A549 (cell line): ENCODE measurements at regions of chr2 and their contacts with region 1.

Region 1: DNA sequence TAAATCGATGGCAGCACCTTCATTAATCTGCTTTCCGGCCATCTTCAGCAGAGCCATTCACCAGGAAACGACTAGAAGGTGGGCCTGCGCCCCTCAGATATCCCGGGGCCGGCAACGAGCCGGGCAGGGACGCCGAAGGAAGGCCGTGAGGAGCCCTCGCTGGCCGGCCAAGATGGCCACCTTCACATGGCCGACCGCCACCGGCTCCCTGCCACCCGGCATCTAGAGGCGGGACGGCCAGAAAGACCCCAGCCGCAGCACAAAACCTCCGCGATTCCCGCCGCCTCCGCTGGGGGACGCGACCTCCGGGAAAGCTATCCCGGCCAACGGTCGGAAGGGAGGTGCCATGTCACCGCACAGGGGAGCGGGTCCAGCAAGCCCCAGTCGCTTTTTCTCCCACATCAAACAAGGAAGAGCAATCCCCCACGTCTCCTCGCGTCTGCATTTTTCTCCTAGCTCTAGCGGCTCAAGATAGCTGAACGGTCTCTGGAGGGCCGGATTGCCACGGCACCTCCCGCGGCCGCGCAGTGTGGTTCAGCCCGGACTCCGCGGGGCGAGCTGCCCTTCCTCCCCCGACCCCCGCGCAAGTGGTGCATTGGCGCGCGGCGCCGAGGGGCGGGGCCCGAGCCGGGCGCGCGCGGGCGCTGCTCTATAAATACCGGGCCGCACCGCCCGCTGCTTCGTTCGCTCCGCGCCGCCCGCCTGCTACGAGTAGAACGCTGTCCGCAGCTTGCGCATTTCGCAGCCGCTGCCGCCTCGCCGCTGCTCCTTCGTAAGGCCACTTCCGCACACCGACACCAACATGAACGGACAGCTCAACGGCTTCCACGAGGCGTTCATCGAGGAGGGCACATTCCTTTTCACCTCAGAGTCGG is at the start of gene MAT2A:
- DNase-seq: peak; percentile 74 to 97
- ATAC-seq: peak; percentile 75 to 82
- H3K4me3 ChIP-seq: peak within 1 kb of the TSS; percentile 98
- H3K27ac ChIP-seq: peak within 1 kb of the TSS; percentile 98 to 100
- H3K4me1 ChIP-seq: peaks cover 47% of the 10 kb centered on the region
- CTCF ChIP-seq: peak; percentile 60
- EP300 ChIP-seq: no peak
- POLR2A ChIP-seq: peak; percentile 100
- RAD21 ChIP-seq: peak; percentile 56 to 63; a peak in 4 of 5 replicates
- polyA plus RNA-seq, gene MAT2A: 1,024 and 1,329 TPM in 2 replicates

Region 2: GRCh38 chr2:85181134-85181631 is 357.5 kb before region 1 on chr2:
- CTCF ChIA-PET with region 1: no interaction called
- POLR2A ChIA-PET with region 1: no interaction called
- DNase-seq: no peak
- ATAC-seq: peak in 1 of 2 experiments; percentile 55; a peak in 3 of 6 replicates
- H3K4me3 ChIP-seq: no peak overlapping the region
- H3K27ac ChIP-seq: no peak overlapping the region
- H3K4me1 ChIP-seq: no peaks in the 10 kb centered on the region
- CTCF ChIP-seq: no peak
- EP300 ChIP-seq: no peak
- POLR2A ChIP-seq: no peak
- RAD21 ChIP-seq: no peak

Region 3: DNA sequence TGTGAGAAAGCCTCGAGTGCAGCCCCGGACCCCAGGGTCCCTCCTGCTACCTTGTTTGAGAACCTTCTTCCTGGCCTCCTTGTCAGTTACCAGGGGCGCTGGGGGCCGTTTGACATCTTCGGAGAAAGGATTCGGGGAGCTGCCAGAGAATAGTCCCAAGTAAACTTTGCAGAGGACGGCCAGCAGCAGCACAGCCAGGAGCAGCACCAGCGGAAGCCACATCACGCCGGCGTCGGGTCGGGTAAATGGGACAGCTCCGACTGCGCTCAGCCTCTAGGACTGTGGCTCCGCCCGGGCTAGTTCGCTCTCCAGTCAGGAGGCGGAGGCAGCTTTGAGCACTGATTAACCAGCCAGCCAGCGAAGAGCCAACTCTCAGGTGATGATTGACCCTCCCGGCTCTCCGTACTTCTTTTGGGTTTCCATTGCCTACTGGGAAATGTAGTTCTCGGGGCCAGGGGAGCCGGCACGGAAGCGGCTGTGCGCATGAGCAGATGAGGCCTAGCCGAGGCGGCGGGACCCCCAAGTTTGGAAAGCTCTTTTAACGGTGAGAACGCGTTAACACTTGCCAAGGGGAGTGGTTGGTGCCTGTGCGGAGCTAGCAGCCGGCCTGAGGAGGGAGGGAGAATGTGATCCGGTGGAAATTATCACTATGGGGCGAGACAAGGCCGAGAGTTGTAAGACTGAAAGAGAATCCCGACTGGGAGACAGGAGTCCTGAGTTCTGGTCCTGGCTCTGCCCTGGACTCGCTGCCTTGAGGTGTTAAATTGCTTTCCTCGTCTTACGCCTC is 184.2 kb before region 1 on chr2 and contains the starts of genes ELMOD3 and RETSAT:
- CTCF ChIA-PET with region 1: interaction called, 5 read pairs
- POLR2A ChIA-PET with region 1: interaction called, 25 read pairs
- DNase-seq: peak; percentile 98 to 100
- ATAC-seq: peak; percentile 94 to 99
- H3K4me3 ChIP-seq: peak within 1 kb of the TSS; percentile 83
- H3K27ac ChIP-seq: peak within 1 kb of the TSS; percentile 85 to 91
- H3K4me1 ChIP-seq: peaks cover 15% of the 10 kb centered on the region
- CTCF ChIP-seq: no peak
- EP300 ChIP-seq: no peak
- POLR2A ChIP-seq: peak; percentile 99
- RAD21 ChIP-seq: no peak
- polyA plus RNA-seq, gene ELMOD3: 29.9 and 31.9 TPM in 2 replicates
- polyA plus RNA-seq, gene RETSAT: 51.6 and 52.3 TPM in 2 replicates

Region 4: DNA sequence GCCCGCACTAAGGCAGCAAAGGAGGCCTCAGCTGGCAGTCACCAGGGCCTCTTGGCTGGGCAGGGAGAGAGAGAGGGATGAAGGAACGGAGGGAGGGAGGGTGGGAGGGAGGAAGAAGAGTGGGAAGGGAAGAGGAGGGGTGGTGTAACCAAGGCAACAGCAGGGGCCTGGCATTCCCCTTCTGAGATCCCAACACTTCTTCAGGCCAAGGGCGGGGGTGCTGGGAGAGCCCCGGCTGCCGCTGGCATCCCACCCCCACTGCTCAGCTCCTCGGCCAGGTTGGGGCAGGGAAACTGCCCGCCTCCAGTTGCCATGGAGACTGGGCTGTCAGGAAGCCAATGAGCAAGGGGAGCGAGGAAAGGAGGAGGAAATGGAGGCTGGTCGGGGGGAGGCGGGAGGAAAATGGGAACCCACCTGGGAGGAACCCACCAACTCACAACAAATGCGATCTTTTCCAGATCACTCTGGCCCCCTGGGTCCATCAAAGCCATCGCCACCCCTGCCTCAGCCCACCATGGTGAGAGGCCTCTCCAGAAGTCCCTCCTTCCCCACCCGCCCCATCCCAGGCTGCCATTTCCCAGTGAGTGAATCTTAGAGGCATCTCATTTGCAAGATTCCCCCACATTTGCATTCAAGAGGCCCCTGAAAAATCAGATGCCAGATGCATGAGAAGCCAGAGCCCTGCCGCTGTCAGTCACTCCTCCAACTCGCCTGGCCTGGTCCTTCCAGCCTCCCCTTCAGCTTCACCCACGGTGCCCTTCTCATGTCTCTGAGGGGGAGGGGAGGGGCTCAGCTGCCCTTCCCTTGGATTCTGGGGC is 107.8 kb before region 1 on chr2:
- CTCF ChIA-PET with region 1: interaction called, 1,185 read pairs
- POLR2A ChIA-PET with region 1: interaction called, 261 read pairs
- DNase-seq: no peak
- ATAC-seq: no peak
- H3K4me3 ChIP-seq: no peak overlapping the region
- H3K27ac ChIP-seq: peak overlapping the region; percentile 62 to 80; a peak in 5 of 6 replicates
- H3K4me1 ChIP-seq: peaks cover 62% of the 10 kb centered on the region
- CTCF ChIP-seq: no peak
- EP300 ChIP-seq: no peak
- POLR2A ChIP-seq: no peak
- RAD21 ChIP-seq: no peak

Region 5: DNA sequence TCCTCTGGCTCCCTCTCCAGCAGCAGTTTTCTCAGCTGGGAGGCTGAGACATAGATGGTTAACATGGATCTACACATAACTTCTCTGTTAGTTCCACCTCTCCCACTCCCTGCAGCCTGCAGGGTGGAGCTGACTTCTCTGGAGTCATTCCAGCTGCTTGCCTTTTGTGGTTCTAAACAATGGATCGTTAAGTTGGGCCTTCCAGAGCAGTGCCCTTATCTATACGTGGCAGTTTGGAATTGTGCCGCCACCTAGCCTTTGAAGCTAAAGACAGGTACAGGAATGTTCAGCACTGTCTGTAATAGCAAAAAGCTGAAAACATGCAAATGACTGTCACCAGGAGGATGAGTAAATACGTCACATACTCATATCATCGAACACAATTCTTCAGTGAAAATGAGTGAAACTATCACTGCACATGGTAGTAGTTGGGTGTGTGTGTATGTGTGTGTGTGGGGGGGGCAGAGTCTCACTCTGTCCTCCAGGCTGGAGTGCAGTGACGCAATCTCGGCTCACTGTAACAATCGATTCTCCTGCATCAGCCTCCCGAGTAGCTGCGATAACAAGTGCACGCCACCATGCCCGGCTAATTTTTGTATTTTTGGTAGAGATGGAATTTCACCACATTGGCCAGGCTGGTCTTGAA is 69.9 kb before region 1 on chr2:
- CTCF ChIA-PET with region 1: interaction called, 9 read pairs
- POLR2A ChIA-PET with region 1: interaction called, 68 read pairs
- DNase-seq: peak; percentile 69 to 82
- ATAC-seq: peak; percentile 82 to 83
- H3K4me3 ChIP-seq: no peak overlapping the region
- H3K27ac ChIP-seq: peak overlapping the region; percentile 81 to 86
- H3K4me1 ChIP-seq: peaks cover 66% of the 10 kb centered on the region
- CTCF ChIP-seq: no peak
- EP300 ChIP-seq: no peak
- POLR2A ChIP-seq: no peak
- RAD21 ChIP-seq: peak in 1 of 2 experiments; percentile 8; a peak in 2 of 5 replicates

Region 6: DNA sequence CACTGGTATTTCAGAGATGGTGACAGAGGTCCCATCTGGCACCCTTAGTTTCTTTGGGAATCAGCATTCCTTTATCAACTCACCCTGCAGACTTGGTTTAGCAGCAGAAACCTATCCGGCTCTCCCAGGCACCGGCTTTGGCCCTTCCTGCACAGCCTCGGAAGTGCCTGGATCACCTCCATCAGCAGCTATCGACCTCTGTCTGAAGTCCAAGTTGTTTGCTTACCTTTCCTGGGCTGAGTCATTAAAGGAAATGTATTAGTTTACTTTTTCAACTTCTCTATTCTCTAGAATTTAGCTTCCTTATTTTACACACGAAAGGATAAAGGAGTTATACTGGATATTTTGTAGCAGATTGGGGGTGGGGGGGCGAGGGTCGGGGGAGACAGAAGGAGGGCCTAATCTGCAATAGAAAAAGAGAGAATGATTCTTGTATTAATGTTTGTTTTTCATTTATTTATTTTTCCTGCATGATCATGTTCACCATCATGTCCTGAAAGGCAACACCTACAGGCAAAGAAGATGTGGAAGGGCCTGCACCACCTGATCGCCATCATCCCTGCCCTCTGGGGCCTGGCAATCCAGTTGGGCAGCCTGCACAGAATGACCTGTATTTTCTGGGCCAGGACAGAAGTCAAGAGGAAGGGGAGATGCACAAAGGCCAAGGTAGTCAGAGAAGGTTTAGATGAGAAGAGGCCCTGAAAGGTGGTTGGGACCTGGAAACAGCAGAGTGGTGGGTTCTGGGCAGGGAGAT is 21.9 kb before region 1 on chr2:
- CTCF ChIA-PET with region 1: interaction called, 145 read pairs
- POLR2A ChIA-PET with region 1: interaction called, 20 read pairs
- DNase-seq: peak; percentile 40 to 72
- ATAC-seq: peak; percentile 88 to 91
- H3K4me3 ChIP-seq: no peak overlapping the region
- H3K27ac ChIP-seq: peak overlapping the region; percentile 64 to 81
- H3K4me1 ChIP-seq: peaks cover 32% of the 10 kb centered on the region
- CTCF ChIP-seq: no peak
- EP300 ChIP-seq: no peak
- POLR2A ChIP-seq: no peak
- RAD21 ChIP-seq: 0 out of 5 replicates have a peak, but pooled peaks have one; percentile 8 to 9

Region 7: GRCh38 chr2:85561317-85561979 is 22.7 kb after region 1 on chr2 and contains the start of gene GGCX:
- CTCF ChIA-PET with region 1: interaction called, 183 read pairs
- POLR2A ChIA-PET with region 1: interaction called, 11 read pairs
- DNase-seq: peak; percentile 89 to 97
- ATAC-seq: peak; percentile 96 to 98
- H3K4me3 ChIP-seq: peak within 1 kb of the TSS; percentile 91
- H3K27ac ChIP-seq: peak within 1 kb of the TSS; percentile 90
- H3K4me1 ChIP-seq: peaks cover 13% of the 10 kb centered on the region
- CTCF ChIP-seq: no peak
- EP300 ChIP-seq: no peak
- POLR2A ChIP-seq: peak; percentile 88
- RAD21 ChIP-seq: no peak; a peak in 2 of 5 replicates
- polyA plus RNA-seq, gene GGCX: 39.0 and 49.6 TPM in 2 replicates